Panc1 (cell line): ENCODE measurements at regions of chr18 and their contacts with region 1.

Region 1: GRCh38 chr18:75230163-75231052 is 19.8 kb downstream of the TSHZ1 start:
- DNase-seq: no peak
- ATAC-seq: no peak
- H3K4me3 ChIP-seq: no peak overlapping the region
- H3K27ac ChIP-seq: no peak overlapping the region
- H3K4me1 ChIP-seq: no peaks in the 10 kb centered on the region
- H3K27me3 ChIP-seq: no peaks in the 10 kb centered on the region
- CTCF ChIP-seq: no peak

Region 2: DNA sequence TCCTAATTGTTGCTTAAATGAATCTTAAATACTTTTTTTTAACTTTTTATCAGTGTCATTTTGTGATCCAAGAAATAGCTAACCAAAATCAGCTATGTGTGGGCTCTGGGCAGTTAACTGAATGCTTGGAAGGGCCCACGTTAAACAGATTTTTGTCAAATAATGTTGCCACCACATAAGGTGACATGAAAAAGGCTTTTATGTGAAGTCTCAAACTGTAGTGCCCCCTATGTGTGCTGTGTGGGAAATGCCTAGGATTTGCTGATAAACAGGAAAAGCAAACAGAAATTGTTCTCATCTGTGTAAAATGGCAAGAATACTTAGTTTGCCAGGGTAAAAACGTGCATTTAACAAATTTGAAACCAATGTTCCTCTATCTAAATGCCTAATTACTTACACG is 1022.5 kb after region 1 on chr18:
- CTCF ChIA-PET with region 1: interaction called, 14 read pairs
- POLR2A ChIA-PET with region 1: no interaction called
- in situ Hi-C with region 1: no loop called
- intact Hi-C with region 1: no loop called
- DNase-seq: no peak
- ATAC-seq: no peak
- H3K4me3 ChIP-seq: no peak overlapping the region
- H3K27ac ChIP-seq: no peak overlapping the region
- H3K4me1 ChIP-seq: no peaks in the 10 kb centered on the region
- H3K27me3 ChIP-seq: peaks cover 64% of the 10 kb centered on the region
- CTCF ChIP-seq: peak; percentile 64